B cell (primary cell): ENCODE measurements at regions of chr10 and their contacts with region 1.

Region 1: GRCh38 chr10:133261726-133262325 is 14.8 kb downstream of the ADAM8 start:
- DNase-seq: peak; percentile 88
- ATAC-seq: peak; percentile 56
- H3K4me3 ChIP-seq: peak overlapping the region in 4 of 5 experiments; percentile 49 to 79 (median 62)
- H3K4me3 Mint-ChIP-seq: peak overlapping the region; percentile 89
- H3K27ac ChIP-seq: peak overlapping the region; percentile 73 to 87
- H3K27ac Mint-ChIP-seq: peak overlapping the region; percentile 73
- H3K4me1 ChIP-seq: peaks cover 59 to 78% of the 10 kb centered on the region in 2 donors
- H3K4me1 Mint-ChIP-seq: peaks cover 74% of the 10 kb centered on the region
- H3K27me3 ChIP-seq: no peaks in the 10 kb centered on the region
- H3K27me3 Mint-ChIP-seq: no peaks in the 10 kb centered on the region
- CTCF ChIP-seq: no peak

Region 2: GRCh38 chr10:132331526-132332432 is 930.0 kb before region 1 on chr10 and contains the start of gene LRRC27:
- CTCF ChIA-PET with region 1: no interaction called
- POLR2A ChIA-PET with region 1: no interaction called
- intact Hi-C with region 1: loop called (anchors 5 kb)
- DNase-seq: peak; percentile 100
- ATAC-seq: peak; percentile 78
- H3K4me3 ChIP-seq: peak within 1 kb of the TSS; percentile 81 to 95 (median 90)
- H3K4me3 Mint-ChIP-seq: peak within 1 kb of the TSS; percentile 83
- H3K27ac ChIP-seq: peak within 1 kb of the TSS; percentile 93 to 96
- H3K27ac Mint-ChIP-seq: peak within 1 kb of the TSS; percentile 99
- H3K4me1 ChIP-seq: peaks cover 50 to 60% of the 10 kb centered on the region in 2 donors
- H3K4me1 Mint-ChIP-seq: peaks cover 75% of the 10 kb centered on the region
- H3K27me3 ChIP-seq: no peaks in the 10 kb centered on the region
- H3K27me3 Mint-ChIP-seq: no peaks in the 10 kb centered on the region
- CTCF ChIP-seq: no peak
- total RNA-seq, gene LRRC27: 23.6 and 32.2 TPM in 2 replicates

Region 3: DNA sequence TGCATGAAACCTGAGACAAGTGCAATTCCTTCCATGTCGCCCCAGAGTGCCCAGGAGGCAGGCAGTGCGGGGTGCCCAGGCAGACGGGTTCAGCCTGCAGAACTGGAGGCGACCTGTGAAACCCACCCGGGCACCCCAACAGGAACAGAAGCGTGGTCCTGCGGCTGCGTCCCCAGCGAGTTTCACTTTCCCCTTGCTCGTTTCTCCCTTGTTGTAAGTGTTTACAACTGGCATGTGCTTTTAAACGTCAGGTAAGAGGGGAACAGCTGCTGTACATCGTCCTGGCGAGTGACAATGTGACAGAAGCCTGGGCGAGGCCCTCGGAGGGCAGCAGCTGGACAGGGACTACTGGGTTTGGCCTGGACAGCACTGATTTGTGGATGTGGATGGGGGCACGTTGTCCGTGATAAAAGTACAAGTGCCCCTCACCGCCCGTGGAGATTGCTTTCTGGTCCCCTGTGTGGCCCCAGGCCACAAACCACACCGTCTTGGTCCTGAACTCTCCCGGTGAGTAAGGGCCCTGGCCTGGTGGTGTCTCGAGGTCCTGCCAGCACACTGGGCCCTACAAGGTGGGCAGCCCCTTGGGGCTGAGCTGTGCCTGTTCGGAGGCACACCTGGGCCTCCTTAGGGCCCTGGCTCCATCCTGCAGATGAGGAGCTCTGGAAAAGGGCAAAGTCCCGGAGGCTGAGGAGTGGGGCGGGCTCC is 20.2 kb before region 1 on chr10:
- CTCF ChIA-PET with region 1: interaction called, 5 read pairs
- POLR2A ChIA-PET with region 1: interaction called, 3 read pairs
- intact Hi-C with region 1: loop called (anchors 2 kb)
- DNase-seq: peak; percentile 62
- ATAC-seq: peak; percentile 45
- H3K4me3 ChIP-seq: peak overlapping the region in 4 of 5 experiments; percentile 57 to 70 (median 65)
- H3K4me3 Mint-ChIP-seq: peak overlapping the region; percentile 85
- H3K27ac ChIP-seq: peak overlapping the region; percentile 4 to 14
- H3K27ac Mint-ChIP-seq: peak overlapping the region; percentile 50
- H3K4me1 ChIP-seq: peaks cover 44 to 50% of the 10 kb centered on the region in 2 donors
- H3K4me1 Mint-ChIP-seq: peaks cover 33% of the 10 kb centered on the region
- H3K27me3 ChIP-seq: peaks cover 0 to 28% (median 13%) of the 10 kb centered on the region in 4 experiments
- H3K27me3 Mint-ChIP-seq: peaks cover 13% of the 10 kb centered on the region
- CTCF ChIP-seq: no peak

Region 4: GRCh38 chr10:133309111-133309719 is 47.4 kb after region 1 on chr10:
- CTCF ChIA-PET with region 1: interaction called, 17 read pairs
- POLR2A ChIA-PET with region 1: no interaction called
- intact Hi-C with region 1: loop called (anchors 1 kb)
- DNase-seq: no peak
- ATAC-seq: peak; percentile 90
- H3K4me3 ChIP-seq: peak overlapping the region in 4 of 5 experiments; percentile 73 to 94 (median 92)
- H3K4me3 Mint-ChIP-seq: peak overlapping the region; percentile 78
- H3K27ac ChIP-seq: peak overlapping the region; percentile 96 to 97
- H3K27ac Mint-ChIP-seq: peak overlapping the region; percentile 88
- H3K4me1 ChIP-seq: peaks cover 21 to 41% of the 10 kb centered on the region in 2 donors
- H3K4me1 Mint-ChIP-seq: peaks cover 37% of the 10 kb centered on the region
- H3K27me3 ChIP-seq: no peaks in the 10 kb centered on the region
- H3K27me3 Mint-ChIP-seq: no peaks in the 10 kb centered on the region
- CTCF ChIP-seq: no peak

Region 5: DNA sequence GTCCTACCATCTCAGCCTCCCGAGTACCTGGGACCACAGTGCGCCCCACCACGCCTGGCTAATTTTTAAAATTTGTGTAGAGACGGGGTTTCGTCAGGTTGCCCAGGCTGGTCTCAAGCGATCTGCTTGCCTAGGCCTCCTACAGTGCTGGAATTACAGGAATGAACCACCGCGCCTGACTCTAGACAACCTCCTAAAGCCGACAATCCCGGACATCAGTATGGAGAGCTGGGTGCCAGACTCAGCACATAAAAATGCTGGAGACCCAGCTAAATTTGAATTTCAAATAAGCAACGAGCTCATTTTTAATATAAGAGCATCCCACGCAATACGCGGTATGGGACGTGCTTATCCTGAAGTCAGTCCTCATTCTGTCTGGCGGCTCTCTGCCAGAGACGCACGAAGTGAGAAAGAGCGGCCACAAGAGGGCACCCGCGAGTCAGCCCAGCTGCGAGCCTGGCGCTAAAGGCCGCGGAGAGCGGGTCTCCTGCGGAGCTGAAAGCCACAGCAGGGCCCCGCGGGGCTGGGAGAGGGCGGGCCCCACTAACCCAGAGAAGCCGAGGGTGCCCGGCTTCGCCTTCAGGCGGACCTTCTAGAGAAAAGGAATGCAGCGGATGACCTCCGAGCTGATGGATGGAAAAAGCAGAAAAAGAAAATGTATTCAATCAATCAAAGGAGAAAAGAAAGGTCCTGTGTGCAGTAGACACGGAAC is 67.8 kb after region 1 on chr10:
- CTCF ChIA-PET with region 1: interaction called, 10 read pairs
- POLR2A ChIA-PET with region 1: no interaction called
- intact Hi-C with region 1: no loop called
- DNase-seq: peak; percentile 91
- ATAC-seq: peak; percentile 86
- H3K4me3 ChIP-seq: peak overlapping the region in 3 of 5 experiments; percentile 15 to 47 (median 38)
- H3K4me3 Mint-ChIP-seq: peak overlapping the region; percentile 44
- H3K27ac ChIP-seq: no peak overlapping the region
- H3K27ac Mint-ChIP-seq: no peak overlapping the region
- H3K4me1 ChIP-seq: peaks cover 28 to 42% of the 10 kb centered on the region in 2 donors
- H3K4me1 Mint-ChIP-seq: peaks cover 17% of the 10 kb centered on the region
- H3K27me3 ChIP-seq: peaks cover 0 to 55% (median 38%) of the 10 kb centered on the region in 4 experiments
- H3K27me3 Mint-ChIP-seq: peaks cover 43% of the 10 kb centered on the region
- CTCF ChIP-seq: peak; percentile 97

Region 6: DNA sequence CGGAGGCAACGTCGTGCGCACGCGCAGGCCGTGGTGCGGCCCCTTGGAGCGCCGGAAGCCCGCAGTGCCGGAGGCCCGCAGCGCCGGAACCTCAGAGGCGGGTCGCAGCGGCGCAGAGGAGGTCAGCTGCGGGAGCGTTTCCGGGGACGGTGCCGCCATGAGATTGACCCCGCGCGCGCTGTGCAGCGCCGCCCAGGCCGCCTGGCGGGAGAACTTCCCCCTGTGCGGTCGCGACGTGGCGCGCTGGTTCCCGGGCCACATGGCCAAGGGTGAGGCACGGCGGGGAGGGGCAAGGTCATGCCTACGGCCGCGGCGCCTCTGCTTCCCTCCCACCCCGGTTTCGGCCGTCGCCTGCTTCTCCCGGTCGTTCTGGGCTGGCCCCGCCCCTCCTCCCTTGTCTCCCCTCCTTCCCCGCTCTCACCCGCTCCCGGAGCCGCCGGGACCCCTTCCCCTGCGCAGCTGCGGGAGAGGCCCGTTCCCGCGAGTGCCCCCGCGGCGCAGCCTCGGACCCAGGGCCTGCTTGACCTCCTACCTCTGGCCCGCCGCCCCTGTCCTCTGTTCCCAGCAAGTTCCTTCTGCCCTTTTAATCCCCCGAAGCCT is 132.3 kb after region 1 on chr10 and contains the start of gene MTG1:
- CTCF ChIA-PET with region 1: interaction called, 3 read pairs
- POLR2A ChIA-PET with region 1: no interaction called
- intact Hi-C with region 1: loop called (anchors 1 kb)
- DNase-seq: peak; percentile 95
- ATAC-seq: peak; percentile 66
- H3K4me3 ChIP-seq: peak within 1 kb of the TSS; percentile 64 to 84 (median 74)
- H3K4me3 Mint-ChIP-seq: peak within 1 kb of the TSS; percentile 92
- H3K27ac ChIP-seq: peak within 1 kb of the TSS; percentile 51 to 81
- H3K27ac Mint-ChIP-seq: peak within 1 kb of the TSS; percentile 89
- H3K4me1 ChIP-seq: peaks cover 44 to 56% of the 10 kb centered on the region in 2 donors
- H3K4me1 Mint-ChIP-seq: peaks cover 59% of the 10 kb centered on the region
- H3K27me3 ChIP-seq: no peaks in the 10 kb centered on the region
- H3K27me3 Mint-ChIP-seq: no peaks in the 10 kb centered on the region
- CTCF ChIP-seq: no peak
- total RNA-seq, gene MTG1: 85.1 and 90.0 TPM in 2 replicates